Left cardiac atrium (tissue), 4 donors: ENCODE measurements at regions of chr5 and their contacts with region 1.

Region 1: DNA sequence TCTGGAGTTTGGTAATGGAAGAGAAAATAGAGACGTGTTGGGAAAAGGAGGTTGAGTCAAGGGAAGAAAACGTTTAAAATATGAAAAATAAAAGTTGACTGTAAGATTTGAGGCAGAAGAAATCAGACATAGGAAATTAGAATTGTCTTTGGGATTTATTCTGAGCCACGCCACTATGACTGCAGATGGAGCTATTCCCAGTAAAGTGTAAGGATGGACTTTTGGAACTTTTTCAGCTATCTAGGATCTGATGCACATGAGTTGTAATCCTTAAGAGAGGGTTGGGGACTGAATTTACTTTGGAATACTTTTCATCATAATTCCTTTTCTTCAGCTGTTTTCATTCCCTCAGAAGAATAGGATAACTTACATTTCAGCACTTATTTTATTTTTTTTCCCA is 336.7 kb downstream of the FAM170A start:
- DNase-seq: no peak
- ATAC-seq: no peak

Region 2: GRCh38 chr5:119913425-119913824 is 52.6 kb before region 1 on chr5:
- intact Hi-C with region 1: no loop called
- DNase-seq: no peak
- ATAC-seq: no peak

Region 3: DNA sequence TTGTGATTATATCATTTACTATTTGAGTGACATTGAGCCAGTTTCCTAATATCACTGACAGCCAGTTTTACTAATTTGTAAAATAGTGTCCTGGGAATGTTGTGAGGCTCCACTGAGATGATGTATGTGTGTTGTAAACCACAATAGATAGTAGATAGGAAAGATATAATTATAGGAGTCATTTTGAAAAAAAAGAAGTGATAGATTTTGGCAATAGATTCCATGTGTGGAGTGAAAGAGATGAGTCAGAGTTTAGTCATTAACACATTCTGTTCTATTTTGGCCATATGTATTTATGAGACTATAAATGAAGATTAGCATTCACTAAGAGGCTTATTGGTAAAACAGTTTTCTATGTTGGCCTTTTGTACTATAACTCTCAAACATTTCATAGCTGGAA is 51.5 kb after region 1 on chr5:
- intact Hi-C with region 1: no loop called
- DNase-seq: no peak
- ATAC-seq: no peak

Region 4: DNA sequence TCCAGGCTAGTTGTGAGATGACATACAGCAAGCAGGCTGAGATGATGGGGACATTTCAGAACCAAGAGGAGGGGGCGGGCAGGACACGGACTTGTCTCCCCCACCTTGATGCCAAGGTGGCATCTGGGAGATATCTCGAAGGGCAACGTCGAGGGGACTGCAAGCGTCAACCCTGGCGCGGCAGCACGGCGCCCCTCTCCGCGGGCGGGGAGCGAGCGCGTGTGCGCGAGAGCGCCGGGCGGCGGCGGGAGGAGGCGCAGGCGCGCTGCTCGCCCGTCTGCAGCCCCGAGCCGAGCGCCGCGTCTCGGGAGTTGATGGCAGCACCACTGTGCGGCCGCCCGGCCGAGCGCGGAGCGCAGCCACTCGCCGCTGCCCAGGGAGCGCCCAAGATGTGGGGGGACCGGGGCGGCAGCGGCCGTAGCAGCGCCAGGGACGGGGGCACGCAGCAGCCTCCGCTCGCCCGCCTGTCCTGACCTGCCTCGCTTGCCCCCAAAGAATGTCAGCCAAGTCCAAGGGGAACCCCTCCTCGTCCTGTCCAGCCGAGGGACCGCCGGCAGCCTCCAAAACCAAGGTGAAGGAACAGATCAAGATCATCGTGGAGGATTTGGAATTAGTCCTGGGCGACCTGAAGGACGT is 498.1 kb after region 1 on chr5 and contains the start of gene PRR16:
- intact Hi-C with region 1: loop called in 1 of 2 experiments (anchors 5 kb)
- DNase-seq: peak; percentile 51
- ATAC-seq: peak; percentile 93 to 94
- total RNA-seq, gene PRR16: 4.7 to 4.8 TPM